Activated T-helper 1 cell treated with anti-CD3 and anti-CD28 coated beads, Interleukin-12 subunit alpha, Interleukin-12 subunit beta, Interleukin-2, Interleukin-4 antibody, amounts not matched to agents 30 ng/mL and 10 ng/mL and 1 ng/mL, durations not matched to agents 14 hours and 24 hours and 36 hours (primary cell): ENCODE measurements at regions of chr9 and their contacts with region 1.

Region 1: GRCh38 chr9:110058304-110058953 is 149.5 kb downstream of the C9orf152 start:
- DNase-seq: peak; percentile 24
- H3K4me3 Mint-ChIP-seq: peak overlapping the region; percentile 11
- H3K27ac Mint-ChIP-seq: peak overlapping the region; percentile 83
- H3K4me1 Mint-ChIP-seq: peaks cover 57% of the 10 kb centered on the region
- H3K27me3 Mint-ChIP-seq: no peaks in the 10 kb centered on the region

Region 2: GRCh38 chr9:109101810-109102209 is 956.6 kb before region 1 on chr9:
- intact Hi-C with region 1: loop called (anchors 10 kb)
- DNase-seq: peak; percentile 14
- H3K4me3 Mint-ChIP-seq: peak overlapping the region; percentile 46
- H3K27ac Mint-ChIP-seq: peak overlapping the region; percentile 73
- H3K4me1 Mint-ChIP-seq: peaks cover 65% of the 10 kb centered on the region
- H3K27me3 Mint-ChIP-seq: no peaks in the 10 kb centered on the region

Region 3: GRCh38 chr9:109574068-109574882 is 484.2 kb before region 1 on chr9:
- intact Hi-C with region 1: loop called (anchors 2 kb)
- DNase-seq: peak; percentile 14
- H3K4me3 Mint-ChIP-seq: no peak overlapping the region
- H3K27ac Mint-ChIP-seq: no peak overlapping the region
- H3K4me1 Mint-ChIP-seq: no peaks in the 10 kb centered on the region
- H3K27me3 Mint-ChIP-seq: peaks cover 19% of the 10 kb centered on the region